ENCODE measurements at regions of chr6 and their contacts with region 1.

Region 1: GRCh38 chr6:5084360-5085192 is 565 bp upstream of the PPP1R3G start:
- DNase-seq: peak; percentile 81
- ATAC-seq: peak; percentile 89

Region 2: GRCh38 chr6:4957521-4958231 is 126.9 kb before region 1 on chr6:
- intact Hi-C with region 1: no loop called
- DNase-seq: no peak
- ATAC-seq: peak; percentile 66

Region 3: GRCh38 chr6:5108068-5108467 is 23.5 kb after region 1 on chr6:
- intact Hi-C with region 1: loop called (anchors 1 kb)
- DNase-seq: no peak
- ATAC-seq: peak; percentile 90